Mammary epithelial cell (primary cell): ENCODE measurements at regions of chr12 and their contacts with region 1.

Region 1: DNA sequence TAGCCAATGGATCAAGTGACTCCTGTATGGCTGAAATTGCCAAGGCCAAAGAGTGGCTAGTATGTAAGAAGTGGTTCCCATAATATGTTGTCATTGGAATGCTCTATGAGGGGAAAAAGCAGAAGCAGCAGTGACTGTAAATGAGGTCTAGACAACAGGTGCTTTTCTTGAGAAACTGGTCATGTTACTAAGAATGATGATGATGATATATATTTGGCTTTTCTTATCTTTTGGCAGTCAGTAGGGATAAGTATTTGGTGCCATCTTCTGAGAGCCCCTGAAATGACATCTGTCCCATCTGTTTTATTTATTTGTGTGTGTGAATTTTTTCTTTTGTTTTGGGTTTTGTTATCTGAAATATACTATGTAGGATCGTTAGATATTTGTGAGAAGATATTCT is 141.7 kb downstream of the SYT1 start:
- DNase-seq: no peak
- H3K4me3 ChIP-seq: no peak overlapping the region
- H3K27ac ChIP-seq: no peak overlapping the region
- H3K4me1 ChIP-seq: no peaks in the 10 kb centered on the region
- H3K27me3 ChIP-seq: no peaks in the 10 kb centered on the region
- CTCF ChIP-seq: peak; percentile 34 to 46

Region 2: GRCh38 chr12:78470354-78471195 is 535.7 kb before region 1 on chr12:
- CTCF ChIA-PET with region 1: no interaction called
- dilution Hi-C with region 1: no loop called
- in situ Hi-C with region 1: no loop called
- intact Hi-C with region 1: loop called (anchors 2 kb)
- DNase-seq: peak; percentile 32
- H3K4me3 ChIP-seq: no peak overlapping the region
- H3K27ac ChIP-seq: no peak overlapping the region
- H3K4me1 ChIP-seq: no peaks in the 10 kb centered on the region
- H3K27me3 ChIP-seq: no peaks in the 10 kb centered on the region
- CTCF ChIP-seq: peak; percentile 58 to 65

Region 3: GRCh38 chr12:78562368-78563205 is 443.7 kb before region 1 on chr12:
- CTCF ChIA-PET with region 1: interaction called, 3 read pairs
- dilution Hi-C with region 1: no loop called
- in situ Hi-C with region 1: loop called in 1 of 2 experiments (anchors 10 kb)
- intact Hi-C with region 1: loop called (anchors 1 kb)
- DNase-seq: peak; percentile 9
- H3K4me3 ChIP-seq: no peak overlapping the region
- H3K27ac ChIP-seq: no peak overlapping the region
- H3K4me1 ChIP-seq: no peaks in the 10 kb centered on the region
- H3K27me3 ChIP-seq: no peaks in the 10 kb centered on the region
- CTCF ChIP-seq: peak; percentile 39 to 57

Region 4: DNA sequence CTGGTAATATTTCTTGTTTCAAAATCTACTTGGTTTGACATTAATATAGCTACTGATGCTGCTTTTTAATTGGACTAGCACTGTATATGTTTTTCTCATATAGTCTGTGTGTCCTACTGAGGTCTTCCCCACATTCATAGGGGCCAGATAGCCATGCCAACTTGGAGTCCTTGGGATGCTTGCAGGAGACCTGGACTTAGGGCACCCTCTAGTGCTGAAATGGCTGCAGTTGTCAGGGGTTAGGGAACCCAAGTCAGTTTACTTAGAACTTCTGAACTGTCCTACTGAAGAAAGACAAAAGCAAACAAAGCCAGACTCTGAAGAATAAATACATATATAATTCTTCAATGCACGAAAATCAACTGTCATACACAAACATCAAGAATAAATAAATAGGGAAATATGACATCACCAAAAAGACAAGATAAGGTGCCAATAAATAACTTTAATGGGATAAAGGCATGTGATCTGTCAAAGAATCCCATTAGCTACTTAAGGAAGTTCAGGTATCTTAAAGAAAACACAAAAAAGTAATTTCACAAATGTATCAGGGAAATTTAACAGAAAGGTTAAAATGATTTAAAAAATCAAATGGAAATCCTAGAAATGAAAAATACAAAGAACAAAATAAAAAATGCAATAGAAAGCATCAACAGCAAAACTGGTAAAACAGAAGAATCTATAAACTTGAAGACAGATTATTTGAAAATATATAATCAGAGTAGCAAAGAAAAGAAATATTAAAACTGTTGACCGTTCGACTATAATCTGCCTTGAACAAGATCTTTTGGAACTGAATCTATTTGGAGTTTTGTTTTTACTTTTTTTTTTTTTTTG is 421.4 kb before region 1 on chr12:
- CTCF ChIA-PET with region 1: no interaction called
- dilution Hi-C with region 1: no loop called
- in situ Hi-C with region 1: no loop called
- intact Hi-C with region 1: loop called (anchors 1 kb)
- DNase-seq: peak; percentile 19
- H3K4me3 ChIP-seq: no peak overlapping the region
- H3K27ac ChIP-seq: no peak overlapping the region
- H3K4me1 ChIP-seq: no peaks in the 10 kb centered on the region
- H3K27me3 ChIP-seq: no peaks in the 10 kb centered on the region
- CTCF ChIP-seq: peak; percentile 31 to 52

Region 5: GRCh38 chr12:78641837-78642423 is 364.4 kb before region 1 on chr12:
- CTCF ChIA-PET with region 1: no interaction called
- dilution Hi-C with region 1: no loop called
- in situ Hi-C with region 1: no loop called
- intact Hi-C with region 1: loop called (anchors 5 kb)
- DNase-seq: peak; percentile 4
- H3K4me3 ChIP-seq: no peak overlapping the region
- H3K27ac ChIP-seq: no peak overlapping the region
- H3K4me1 ChIP-seq: no peaks in the 10 kb centered on the region
- H3K27me3 ChIP-seq: no peaks in the 10 kb centered on the region
- CTCF ChIP-seq: peak; percentile 19 to 42

Region 6: DNA sequence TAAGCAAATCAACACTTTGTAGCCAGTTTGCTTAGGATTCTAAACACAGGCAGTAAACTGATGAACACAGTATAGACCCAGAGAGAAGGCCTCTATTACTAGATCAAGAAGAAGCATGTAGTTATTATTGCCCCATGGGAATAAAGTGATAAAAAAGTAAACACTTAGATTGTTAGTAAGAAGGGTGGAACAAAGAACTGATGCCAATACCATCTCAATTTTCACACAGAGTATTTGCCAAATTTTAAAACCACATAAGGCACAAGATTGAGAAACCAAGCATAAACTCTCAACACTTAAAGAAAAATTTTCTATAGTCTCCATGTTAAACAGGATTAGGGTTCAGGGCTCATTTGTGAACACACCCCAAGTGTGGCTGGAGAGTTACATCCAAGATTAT is 218.7 kb before region 1 on chr12:
- CTCF ChIA-PET with region 1: no interaction called
- dilution Hi-C with region 1: no loop called
- in situ Hi-C with region 1: no loop called
- intact Hi-C with region 1: no loop called
- DNase-seq: no peak
- H3K4me3 ChIP-seq: no peak overlapping the region
- H3K27ac ChIP-seq: no peak overlapping the region
- H3K4me1 ChIP-seq: no peaks in the 10 kb centered on the region
- H3K27me3 ChIP-seq: no peaks in the 10 kb centered on the region
- CTCF ChIP-seq: no peak